ENCODE measurements at regions of chr12 and their contacts with region 1.

Region 1: GRCh38 chr12:81257947-81258551 is 180.2 kb downstream of the ACSS3 start:
- H3K4me3 Mint-ChIP-seq: no peak overlapping the region
- H3K27ac Mint-ChIP-seq: no peak overlapping the region
- H3K4me1 Mint-ChIP-seq: no peaks in the 10 kb centered on the region
- H3K27me3 Mint-ChIP-seq: no peaks in the 10 kb centered on the region

Region 2: DNA sequence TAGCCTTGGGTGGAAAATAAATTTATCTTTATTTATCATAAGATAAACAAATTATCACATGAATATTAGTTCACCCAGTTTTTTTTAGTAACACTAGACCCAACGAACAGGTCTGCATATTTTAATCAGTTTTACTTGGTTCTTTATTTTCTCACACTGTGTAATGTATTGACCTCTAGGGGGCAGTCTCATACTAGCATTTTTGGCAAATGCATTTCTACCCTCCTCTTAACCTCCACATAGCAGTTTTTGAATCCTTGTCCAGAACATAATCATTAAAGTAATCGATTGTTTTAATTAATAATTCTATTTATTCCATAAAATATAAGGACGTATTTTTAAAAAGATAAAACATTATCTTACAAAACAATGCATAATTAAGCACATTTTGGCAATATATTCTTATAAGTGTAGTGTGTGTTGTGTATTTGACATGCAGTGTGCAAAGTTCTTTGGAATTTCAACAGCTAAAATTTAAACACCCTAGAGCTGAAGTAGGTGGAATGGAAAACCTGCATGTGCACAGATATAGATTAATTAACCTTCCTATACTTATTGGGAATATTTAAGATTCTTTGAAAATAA is 845.6 kb before region 1 on chr12:
- intact Hi-C with region 1: loop called (anchors 5 kb)
- H3K4me3 Mint-ChIP-seq: no peak overlapping the region
- H3K27ac Mint-ChIP-seq: no peak overlapping the region
- H3K4me1 Mint-ChIP-seq: no peaks in the 10 kb centered on the region
- H3K27me3 Mint-ChIP-seq: no peaks in the 10 kb centered on the region

Region 3: GRCh38 chr12:81208151-81208946 is 49.7 kb before region 1 on chr12:
- intact Hi-C with region 1: no loop called
- H3K4me3 Mint-ChIP-seq: no peak overlapping the region
- H3K27ac Mint-ChIP-seq: no peak overlapping the region
- H3K4me1 Mint-ChIP-seq: no peaks in the 10 kb centered on the region
- H3K27me3 Mint-ChIP-seq: no peaks in the 10 kb centered on the region

Region 4: DNA sequence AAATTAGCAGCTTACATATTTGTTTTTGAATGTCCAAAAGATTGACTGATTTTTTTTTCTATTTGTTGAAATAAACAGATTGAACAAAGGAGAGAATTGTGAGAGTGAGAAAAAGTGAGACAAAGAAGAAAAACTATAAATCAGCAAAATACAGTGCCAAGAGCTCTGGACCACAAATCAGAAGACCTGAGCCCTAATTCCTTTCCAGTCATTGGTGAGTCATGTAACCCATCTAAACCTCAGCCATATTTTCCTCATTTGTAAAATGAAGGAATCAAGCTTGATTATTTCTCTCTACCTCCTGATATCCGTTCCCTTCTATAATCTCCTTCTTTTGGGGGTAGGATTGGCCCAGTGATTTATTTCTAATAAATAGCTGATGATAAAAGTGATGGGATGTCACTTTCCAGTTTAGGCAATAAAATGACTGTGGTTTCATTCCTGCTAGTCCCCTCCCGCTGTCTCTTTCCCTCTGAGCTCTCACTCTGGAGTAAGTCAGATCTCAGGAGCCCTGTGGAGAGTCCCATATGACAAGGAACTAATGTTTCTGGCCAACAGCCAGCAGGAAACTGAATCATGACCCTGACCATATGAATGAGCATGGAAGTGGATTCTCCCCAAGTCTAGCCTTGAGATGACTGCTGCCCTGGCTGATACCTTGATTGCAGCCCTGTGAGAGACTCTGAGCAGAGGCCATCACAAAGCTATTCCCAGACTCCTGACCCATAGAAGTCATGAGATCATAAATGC is 38.7 kb after region 1 on chr12:
- intact Hi-C with region 1: no loop called
- H3K4me3 Mint-ChIP-seq: no peak overlapping the region
- H3K27ac Mint-ChIP-seq: no peak overlapping the region
- H3K4me1 Mint-ChIP-seq: no peaks in the 10 kb centered on the region
- H3K27me3 Mint-ChIP-seq: no peaks in the 10 kb centered on the region

Region 5: DNA sequence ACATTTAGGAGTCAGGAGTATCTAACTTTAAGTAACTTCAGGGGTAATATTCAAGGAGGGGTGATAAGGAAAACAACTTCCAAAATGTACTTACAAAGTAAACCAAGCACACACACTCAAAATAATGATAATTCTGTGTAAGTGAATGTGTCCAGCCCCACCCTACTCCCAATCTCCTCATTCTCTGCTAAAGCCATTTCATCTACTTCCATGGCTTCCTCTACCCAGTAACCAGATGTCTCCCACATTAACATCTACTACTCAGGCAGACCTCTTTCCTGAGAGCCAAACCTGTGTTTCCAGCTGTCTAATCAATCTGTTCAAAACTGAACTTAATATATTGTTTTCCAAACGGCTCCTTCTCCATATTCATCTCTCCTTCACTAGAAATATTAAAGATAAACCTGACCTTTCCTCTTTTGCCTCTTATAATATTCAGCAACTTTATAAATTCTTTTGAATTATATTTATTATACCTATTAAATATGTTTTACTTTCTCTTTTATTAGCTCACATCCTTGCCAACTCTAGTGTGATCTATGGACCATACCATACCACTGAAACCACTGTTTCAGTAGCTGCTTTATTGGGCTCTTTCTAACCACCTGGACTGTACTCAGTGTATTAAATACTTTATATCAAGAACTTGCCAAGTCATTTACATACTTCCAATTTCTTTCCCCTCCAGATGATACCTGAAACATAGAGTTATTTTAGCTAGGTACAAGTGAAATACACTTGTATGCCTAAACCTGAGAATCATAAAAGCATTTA is 330.4 kb after region 1 on chr12:
- intact Hi-C with region 1: no loop called
- H3K4me3 Mint-ChIP-seq: no peak overlapping the region
- H3K27ac Mint-ChIP-seq: no peak overlapping the region
- H3K4me1 Mint-ChIP-seq: no peaks in the 10 kb centered on the region
- H3K27me3 Mint-ChIP-seq: no peaks in the 10 kb centered on the region

Region 6: GRCh38 chr12:82314406-82314892 is 1056.4 kb after region 1 on chr12:
- intact Hi-C with region 1: no loop called
- H3K4me3 Mint-ChIP-seq: no peak overlapping the region
- H3K27ac Mint-ChIP-seq: no peak overlapping the region
- H3K4me1 Mint-ChIP-seq: no peaks in the 10 kb centered on the region
- H3K27me3 Mint-ChIP-seq: no peaks in the 10 kb centered on the region

Measured in dendritic cell treated with granulocyte-macrophage colony-stimulating factor and Interleukin-4, amounts not matched to agents 40 ng/mL and 50 ng/mL, for 4 days (primary cell).